ENCODE measurements at regions of chr14 and their contacts with region 1.

Region 1: GRCh38 chr14:104752735-104753531 is at the start of gene SIVA1:
- DNase-seq: peak; percentile 99
- H3K4me3 ChIP-seq: peak within 1 kb of the TSS; percentile 57 to 93
- H3K4me3 Mint-ChIP-seq: peak within 1 kb of the TSS; percentile 88 to 96 (median 92)
- H3K27ac ChIP-seq: peak within 1 kb of the TSS; percentile 79
- H3K27ac Mint-ChIP-seq: peak within 1 kb of the TSS; percentile 91 to 95 (median 94)
- H3K4me1 ChIP-seq: peaks cover 25% of the 10 kb centered on the region
- H3K4me1 Mint-ChIP-seq: peaks cover 16 to 41% (median 29%) of the 10 kb centered on the region in 4 donors
- H3K27me3 ChIP-seq: no peaks in the 10 kb centered on the region
- H3K27me3 Mint-ChIP-seq: no peaks in the 10 kb centered on the region
- total RNA-seq, gene SIVA1: 69.3 to 80.2 TPM

Region 2: GRCh38 chr14:104689109-104689880 is 63.6 kb before region 1 on chr14 and contains the start of gene INF2:
- CTCF ChIA-PET with region 1: no interaction called
- POLR2A ChIA-PET with region 1: interaction called, 4 read pairs
- intact Hi-C with region 1: loop called (anchors 5 kb)
- DNase-seq: peak; percentile 35 to 57 (median 45)
- H3K4me3 ChIP-seq: peak within 1 kb of the TSS; percentile 54 to 57
- H3K4me3 Mint-ChIP-seq: peak within 1 kb of the TSS; percentile 54 to 84 (median 82)
- H3K27ac ChIP-seq: peak within 1 kb of the TSS; percentile 59
- H3K27ac Mint-ChIP-seq: peak within 1 kb of the TSS in 6 of 7 donors; percentile 26 to 66 (median 44)
- H3K4me1 ChIP-seq: peaks cover 79% of the 10 kb centered on the region
- H3K4me1 Mint-ChIP-seq: peaks cover 29 to 68% (median 48%) of the 10 kb centered on the region in 4 donors
- H3K27me3 ChIP-seq: no peaks in the 10 kb centered on the region
- H3K27me3 Mint-ChIP-seq: no peaks in the 10 kb centered on the region
- total RNA-seq, gene INF2: 93.1 to 96.8 TPM

Region 3: DNA sequence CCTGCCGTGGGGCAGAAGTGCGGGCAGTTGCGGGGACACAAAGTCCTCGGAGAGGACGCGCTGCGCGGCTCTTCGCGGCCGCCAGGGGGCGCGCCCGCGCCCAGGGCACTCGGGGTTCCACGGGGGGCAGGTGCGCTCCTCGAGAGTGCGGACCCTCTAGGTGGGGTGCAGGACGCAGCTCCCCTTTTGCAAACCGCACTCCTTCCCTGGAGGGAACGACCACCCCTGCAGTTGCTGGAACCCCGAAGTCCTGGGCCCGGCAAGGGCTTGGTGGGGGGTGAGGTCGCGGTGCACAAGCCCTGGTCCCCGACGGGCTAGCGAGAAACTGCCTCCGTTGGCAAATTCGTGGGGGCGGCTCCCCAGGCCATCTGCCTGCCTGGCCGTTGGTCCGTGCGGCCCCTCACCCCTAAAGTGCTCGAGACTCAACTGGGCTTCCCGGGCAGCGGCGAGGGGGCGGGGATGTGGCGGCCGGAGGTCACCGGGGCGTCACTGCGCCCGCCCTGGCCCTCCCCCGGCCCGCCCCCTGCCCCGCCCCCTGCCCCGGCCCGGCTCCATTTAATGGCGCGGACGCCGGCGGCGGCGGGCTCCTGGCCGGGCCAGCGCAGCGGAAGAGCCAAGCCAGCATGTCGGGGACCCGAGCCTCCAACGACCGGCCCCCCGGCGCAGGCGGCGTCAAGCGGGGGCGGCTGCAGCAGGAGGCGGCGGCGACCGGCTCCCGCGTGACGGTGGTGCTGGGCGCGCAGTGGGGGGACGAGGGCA is 29.1 kb before region 1 on chr14 and contains the start of gene ADSS1:
- CTCF ChIA-PET with region 1: interaction called, 16 read pairs
- POLR2A ChIA-PET with region 1: interaction called, 21 read pairs
- intact Hi-C with region 1: loop called (anchors 1 kb)
- DNase-seq: peak; percentile 58 to 75 (median 65)
- H3K4me3 ChIP-seq: peak within 1 kb of the TSS; percentile 29 to 63
- H3K4me3 Mint-ChIP-seq: peak within 1 kb of the TSS in 7 of 8 donors; percentile 30 to 82 (median 69)
- H3K27ac ChIP-seq: peak within 1 kb of the TSS; percentile 21
- H3K27ac Mint-ChIP-seq: peak within 1 kb of the TSS in 1 of 7 donors; percentile 53
- H3K4me1 ChIP-seq: peaks cover 10% of the 10 kb centered on the region
- H3K4me1 Mint-ChIP-seq: no peaks in the 10 kb centered on the region
- H3K27me3 ChIP-seq: no peaks in the 10 kb centered on the region
- H3K27me3 Mint-ChIP-seq: no peaks in the 10 kb centered on the region
- total RNA-seq, gene ADSS1: 1.5 TPM

Region 4: GRCh38 chr14:104768437-104769323 is 15.7 kb after region 1 on chr14:
- CTCF ChIA-PET with region 1: interaction called, 13 read pairs
- POLR2A ChIA-PET with region 1: interaction called, 13 read pairs
- intact Hi-C with region 1: no loop called
- DNase-seq: peak; percentile 83 to 89 (median 86)
- H3K4me3 ChIP-seq: no peak overlapping the region
- H3K4me3 Mint-ChIP-seq: no peak overlapping the region
- H3K27ac ChIP-seq: no peak overlapping the region
- H3K27ac Mint-ChIP-seq: peak overlapping the region in 4 of 7 donors; percentile 11 to 77 (median 56)
- H3K4me1 ChIP-seq: peaks cover 3% of the 10 kb centered on the region
- H3K4me1 Mint-ChIP-seq: peaks cover 0 to 4% (median under 1%) of the 10 kb centered on the region in 4 donors
- H3K27me3 ChIP-seq: no peaks in the 10 kb centered on the region
- H3K27me3 Mint-ChIP-seq: no peaks in the 10 kb centered on the region

Region 5: DNA sequence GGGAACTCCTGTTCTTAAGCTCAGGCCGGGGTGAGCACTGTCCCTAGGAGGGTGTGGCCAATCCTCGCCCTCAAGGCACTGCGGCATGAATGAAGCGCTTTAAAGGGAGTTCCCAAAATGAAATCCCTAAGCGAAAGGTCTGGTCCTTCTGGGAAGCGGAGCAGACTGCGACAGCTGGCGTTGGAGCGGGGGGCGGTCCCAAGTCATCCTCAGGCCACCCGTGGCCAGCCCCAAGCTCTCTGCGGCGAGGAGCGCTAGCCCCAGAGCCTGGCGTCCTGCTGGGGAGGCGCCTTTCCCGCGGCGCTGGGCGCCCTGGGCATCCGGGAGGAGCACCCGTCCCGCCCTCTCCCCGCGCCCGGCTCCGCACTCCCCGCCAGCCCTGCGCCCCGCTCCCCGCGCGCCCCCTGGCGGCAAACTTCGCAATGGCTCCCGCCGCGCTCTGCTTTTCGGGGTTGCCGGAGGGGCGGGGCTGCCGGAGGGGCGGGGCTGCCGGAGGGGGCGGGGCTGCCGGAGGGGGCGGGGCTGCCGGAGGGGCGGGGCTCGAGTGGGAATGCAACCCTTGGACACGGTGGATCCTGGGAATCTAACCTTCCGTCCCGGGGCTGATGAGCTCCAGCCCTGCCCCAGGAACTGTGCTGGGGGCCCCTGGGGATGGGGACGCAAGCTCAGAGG is 73.4 kb after region 1 on chr14:
- CTCF ChIA-PET with region 1: interaction called, 17 read pairs
- POLR2A ChIA-PET with region 1: interaction called, 13 read pairs
- intact Hi-C with region 1: no loop called
- DNase-seq: peak; percentile 88 to 97 (median 90)
- H3K4me3 ChIP-seq: peak overlapping the region; percentile 61 to 70
- H3K4me3 Mint-ChIP-seq: peak overlapping the region; percentile 66 to 93 (median 86)
- H3K27ac ChIP-seq: peak overlapping the region; percentile 14
- H3K27ac Mint-ChIP-seq: peak overlapping the region in 4 of 7 donors; percentile 29 to 92 (median 63)
- H3K4me1 ChIP-seq: peaks cover 21% of the 10 kb centered on the region
- H3K4me1 Mint-ChIP-seq: peaks cover 14 to 32% (median 24%) of the 10 kb centered on the region in 4 donors
- H3K27me3 ChIP-seq: no peaks in the 10 kb centered on the region
- H3K27me3 Mint-ChIP-seq: peaks cover 2 to 7% of the 10 kb centered on the region in 2 donors

Region 6: DNA sequence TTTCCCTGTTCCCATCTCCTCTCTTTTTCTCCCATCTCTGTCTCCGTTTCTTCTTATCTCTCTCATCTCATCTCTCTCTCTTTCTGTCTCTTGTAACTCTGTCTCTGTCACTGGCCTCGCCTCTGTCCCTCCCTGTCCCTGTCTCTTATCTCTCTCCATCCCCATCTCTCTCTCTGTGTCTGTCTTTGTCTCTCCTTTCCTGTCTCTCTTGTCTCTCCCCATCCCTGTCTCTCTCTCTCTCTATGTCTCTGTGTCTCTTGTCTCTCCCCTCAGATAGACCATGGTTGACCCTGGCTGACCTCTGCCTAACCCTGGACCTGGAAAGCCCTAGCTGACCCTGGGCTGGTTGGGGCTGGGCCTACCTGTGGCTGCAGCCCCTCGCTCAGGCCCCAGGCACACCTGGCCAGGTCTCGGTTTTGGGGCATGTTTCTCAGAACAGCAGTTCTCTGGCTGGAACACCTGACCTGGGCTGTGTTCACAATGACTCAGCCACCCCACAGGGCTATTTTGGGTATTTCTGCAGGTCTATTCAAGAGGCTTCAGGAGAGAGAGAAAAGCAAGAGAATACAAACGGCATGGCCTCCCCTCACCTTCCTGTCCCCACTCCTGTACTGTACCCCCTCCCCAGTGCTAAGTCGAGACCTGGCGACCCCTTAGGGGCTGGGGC is 947.8 kb after region 1 on chr14:
- CTCF ChIA-PET with region 1: no interaction called
- POLR2A ChIA-PET with region 1: no interaction called
- intact Hi-C with region 1: no loop called
- DNase-seq: no peak
- H3K4me3 ChIP-seq: no peak overlapping the region
- H3K4me3 Mint-ChIP-seq: no peak overlapping the region
- H3K27ac ChIP-seq: no peak overlapping the region
- H3K27ac Mint-ChIP-seq: peak overlapping the region in 1 of 7 donors; percentile 59
- H3K4me1 ChIP-seq: no peaks in the 10 kb centered on the region
- H3K4me1 Mint-ChIP-seq: peaks cover 0 to 2% (median 0%) of the 10 kb centered on the region in 4 donors
- H3K27me3 ChIP-seq: no peaks in the 10 kb centered on the region
- H3K27me3 Mint-ChIP-seq: peaks cover 5 to 6% of the 10 kb centered on the region in 2 donors